IMR-90 (cell line): ENCODE measurements at regions of chr10 and their contacts with region 1.

Region 1: GRCh38 chr10:13787015-13787421 is 200.3 kb downstream of the PRPF18 start:
- DNase-seq: peak; percentile 37
- ATAC-seq: no peak
- H3K4me3 ChIP-seq: no peak overlapping the region
- H3K27ac ChIP-seq: no peak overlapping the region
- H3K4me1 ChIP-seq: peaks cover 21% of the 10 kb centered on the region
- H3K27me3 ChIP-seq: no peaks in the 10 kb centered on the region
- CTCF ChIP-seq: no peak
- POLR2A ChIP-seq: no peak
- RAD21 ChIP-seq: no peak

Region 2: DNA sequence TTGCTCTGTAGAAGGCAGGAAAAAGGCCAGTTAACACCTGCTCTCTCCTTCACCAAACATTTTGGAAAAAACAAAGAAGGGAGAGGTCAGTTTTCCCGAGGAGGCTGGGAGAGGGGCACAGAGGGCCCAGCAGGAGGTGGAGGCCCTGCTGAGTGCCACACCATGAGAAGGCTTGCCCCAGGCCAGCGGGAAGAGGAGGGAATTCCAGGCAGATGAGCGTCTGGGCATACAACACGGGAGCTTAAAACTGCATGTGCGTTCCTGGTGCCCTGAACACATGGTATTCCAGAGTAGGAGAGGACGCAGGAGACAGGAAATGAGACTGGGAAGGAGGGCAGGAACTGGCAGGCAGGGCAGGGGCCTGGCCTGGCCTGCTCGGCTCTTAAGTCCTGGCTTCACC is 967.9 kb before region 1 on chr10:
- CTCF ChIA-PET with region 1: no interaction called
- POLR2A ChIA-PET with region 1: no interaction called
- dilution Hi-C with region 1: no loop called
- in situ Hi-C with region 1: no loop called
- intact Hi-C with region 1: no loop called
- DNase-seq: no peak
- ATAC-seq: 0 out of 2 replicates have a peak, but pooled peaks have one; percentile 27
- H3K4me3 ChIP-seq: no peak overlapping the region
- H3K27ac ChIP-seq: no peak overlapping the region
- H3K4me1 ChIP-seq: peaks cover 4% of the 10 kb centered on the region; the same call in 1 of the 2 replicates
- H3K27me3 ChIP-seq: no peaks in the 10 kb centered on the region; the same call in 1 of the 2 replicates
- CTCF ChIP-seq: no peak
- POLR2A ChIP-seq: no peak
- RAD21 ChIP-seq: no peak

Region 3: DNA sequence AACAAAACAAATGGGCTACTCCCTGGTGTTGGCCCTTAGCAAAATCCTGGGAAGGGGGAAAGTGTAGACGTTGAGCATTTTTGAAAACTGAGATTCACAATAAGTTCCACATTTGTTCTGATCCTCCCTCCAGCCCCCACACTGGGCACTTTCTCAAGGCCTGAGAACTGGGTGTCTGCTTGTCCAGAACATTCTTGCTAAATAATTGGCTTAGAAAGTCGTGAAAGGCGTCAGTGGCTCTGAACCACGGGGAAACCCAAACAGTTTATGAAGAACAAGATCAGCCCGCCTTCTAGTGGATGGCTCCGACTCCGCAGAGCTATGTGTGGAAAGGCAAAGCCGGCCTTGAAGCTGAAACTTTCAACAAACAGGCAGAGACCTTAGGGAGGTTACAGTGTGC is 169.8 kb after region 1 on chr10:
- CTCF ChIA-PET with region 1: interaction called, 3 read pairs
- POLR2A ChIA-PET with region 1: no interaction called
- dilution Hi-C with region 1: no loop called
- in situ Hi-C with region 1: no loop called
- intact Hi-C with region 1: loop called (anchors 2 kb)
- DNase-seq: peak; percentile 80
- ATAC-seq: peak; percentile 70
- H3K4me3 ChIP-seq: no peak overlapping the region
- H3K27ac ChIP-seq: peak overlapping the region; percentile 4; the same call in 1 of the 2 replicates
- H3K4me1 ChIP-seq: peaks cover 15% of the 10 kb centered on the region
- H3K27me3 ChIP-seq: no peaks in the 10 kb centered on the region
- CTCF ChIP-seq: peak; percentile 51
- POLR2A ChIP-seq: no peak
- RAD21 ChIP-seq: peak; percentile 42; the same call in 1 of the 2 replicates

Region 4: DNA sequence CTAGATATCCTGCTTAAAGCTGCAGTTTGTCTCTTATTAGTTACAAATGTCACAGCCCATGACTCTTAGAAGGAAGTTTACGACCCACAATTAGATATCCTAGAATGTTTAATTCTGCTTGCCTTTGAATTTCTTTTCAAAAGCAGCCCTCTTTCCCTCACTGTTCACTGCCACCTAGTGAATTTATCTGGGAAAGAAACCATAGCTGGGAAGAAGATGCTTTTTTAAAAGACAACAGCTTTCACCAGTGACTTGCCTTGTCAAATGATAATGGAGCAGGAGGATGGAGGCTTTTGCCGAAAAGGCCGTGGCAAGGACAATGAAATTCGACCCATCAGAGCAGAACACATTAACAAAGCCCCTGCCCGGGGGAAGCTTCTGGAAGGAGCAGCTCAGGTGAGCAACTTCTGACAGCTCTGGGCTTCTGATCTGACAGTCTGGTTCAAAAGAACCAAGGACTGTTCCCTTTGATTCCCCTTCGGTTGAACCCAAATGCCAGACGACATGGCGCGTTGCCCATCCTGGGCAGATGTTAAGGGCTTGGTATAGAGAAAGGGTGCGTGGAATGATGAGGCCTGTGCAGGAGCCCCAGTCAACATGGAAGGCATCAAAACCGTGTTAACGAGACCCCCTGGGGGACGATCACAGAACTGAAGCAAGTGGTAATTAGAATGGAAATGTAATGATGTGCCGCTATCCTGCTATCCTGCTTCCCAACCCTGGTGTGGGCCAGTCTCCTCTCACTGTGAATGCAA is 306.9 kb after region 1 on chr10:
- CTCF ChIA-PET with region 1: interaction called, 7 read pairs
- POLR2A ChIA-PET with region 1: no interaction called
- dilution Hi-C with region 1: no loop called
- in situ Hi-C with region 1: loop called (anchors 5 kb)
- intact Hi-C with region 1: loop called (anchors 1 kb)
- DNase-seq: peak; percentile 66
- ATAC-seq: peak; percentile 75
- H3K4me3 ChIP-seq: no peak overlapping the region
- H3K27ac ChIP-seq: no peak overlapping the region
- H3K4me1 ChIP-seq: no peaks in the 10 kb centered on the region
- H3K27me3 ChIP-seq: no peaks in the 10 kb centered on the region
- CTCF ChIP-seq: peak; percentile 86
- POLR2A ChIP-seq: no peak
- RAD21 ChIP-seq: peak; percentile 91

Region 5: DNA sequence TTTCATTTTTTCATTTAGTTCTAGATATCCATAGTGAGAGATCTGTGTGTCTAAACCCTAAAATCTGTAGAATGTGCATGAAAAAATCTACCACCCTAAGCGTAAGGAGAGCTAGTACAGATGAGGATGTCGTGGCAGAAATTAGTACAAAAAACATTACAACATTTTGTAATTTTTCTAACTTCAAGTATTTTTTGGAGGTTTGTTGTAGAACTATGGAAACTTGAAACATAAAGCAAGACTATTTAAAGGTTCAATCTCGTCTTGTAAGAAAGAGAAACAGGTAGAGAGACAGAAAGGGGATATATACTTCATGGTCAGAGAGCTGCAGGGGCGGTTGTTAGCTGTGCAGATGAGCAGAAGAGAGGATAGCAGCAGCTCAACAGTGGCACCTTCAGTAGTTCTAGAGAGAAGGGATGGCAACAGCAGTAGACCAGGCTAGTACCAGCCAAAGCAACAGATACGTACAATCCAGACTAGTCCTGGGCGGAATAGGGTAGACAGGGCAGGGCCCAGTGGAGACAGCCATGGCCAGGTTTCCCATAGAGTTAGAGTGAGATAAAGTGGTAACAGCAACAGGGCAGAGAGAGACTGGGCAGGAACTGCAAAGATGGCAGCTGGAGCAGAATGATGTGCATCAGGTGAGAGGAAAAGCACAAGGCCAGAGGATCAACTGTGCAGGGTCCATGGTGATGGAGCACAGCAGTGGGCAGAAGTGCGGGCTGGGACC is 398.5 kb after region 1 on chr10:
- CTCF ChIA-PET with region 1: no interaction called
- POLR2A ChIA-PET with region 1: interaction called, 4 read pairs
- dilution Hi-C with region 1: no loop called
- in situ Hi-C with region 1: no loop called
- intact Hi-C with region 1: loop called (anchors 2 kb)
- DNase-seq: peak; percentile 90
- ATAC-seq: peak; percentile 92
- H3K4me3 ChIP-seq: no peak overlapping the region
- H3K27ac ChIP-seq: no peak overlapping the region
- H3K4me1 ChIP-seq: peaks cover 2% of the 10 kb centered on the region; the same call in 1 of the 2 replicates
- H3K27me3 ChIP-seq: peaks cover 32% of the 10 kb centered on the region
- CTCF ChIP-seq: no peak
- POLR2A ChIP-seq: peak; percentile 99
- RAD21 ChIP-seq: no peak

Region 6: DNA sequence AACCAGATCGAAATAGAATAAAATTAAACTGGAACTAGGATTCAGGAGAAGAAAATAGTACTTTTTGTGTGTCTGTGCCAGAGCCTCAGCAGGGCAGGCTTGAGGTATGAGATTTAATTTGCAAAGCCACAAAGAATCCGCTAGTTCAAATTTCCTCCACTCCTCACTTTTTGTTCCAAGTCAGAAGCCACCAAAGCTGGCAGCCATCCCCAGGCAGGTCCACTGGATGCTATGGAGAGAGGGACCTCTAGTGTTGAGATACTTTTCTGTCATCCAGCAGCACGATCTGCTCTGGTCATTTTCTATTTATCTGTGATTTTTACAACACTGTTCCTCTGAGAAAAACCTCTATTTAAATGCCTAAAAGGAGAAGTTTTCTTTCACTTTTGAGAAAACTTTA is 691.6 kb after region 1 on chr10:
- CTCF ChIA-PET with region 1: interaction called, 4 read pairs
- POLR2A ChIA-PET with region 1: no interaction called
- dilution Hi-C with region 1: no loop called
- in situ Hi-C with region 1: loop called (anchors 10 kb)
- intact Hi-C with region 1: loop called (anchors 1 kb)
- DNase-seq: peak; percentile 84
- ATAC-seq: peak; percentile 89
- H3K4me3 ChIP-seq: no peak overlapping the region
- H3K27ac ChIP-seq: no peak overlapping the region
- H3K4me1 ChIP-seq: peaks cover 16% of the 10 kb centered on the region; the same call in 1 of the 2 replicates
- H3K27me3 ChIP-seq: no peaks in the 10 kb centered on the region
- CTCF ChIP-seq: peak; percentile 93
- POLR2A ChIP-seq: peak; percentile 61
- RAD21 ChIP-seq: peak; percentile 98